ENCODE measurements at regions of chr9 and their contacts with region 1.

Region 1: GRCh38 chr9:107172160-107172978 is 110.7 kb upstream of the RAD23B start:
- DNase-seq: peak; percentile 82
- ATAC-seq: peak; percentile 49
- H3K4me3 Mint-ChIP-seq: no peak overlapping the region
- H3K27ac Mint-ChIP-seq: no peak overlapping the region
- H3K4me1 Mint-ChIP-seq: peaks cover 22% of the 10 kb centered on the region
- H3K27me3 Mint-ChIP-seq: peaks cover 7% of the 10 kb centered on the region

Region 2: DNA sequence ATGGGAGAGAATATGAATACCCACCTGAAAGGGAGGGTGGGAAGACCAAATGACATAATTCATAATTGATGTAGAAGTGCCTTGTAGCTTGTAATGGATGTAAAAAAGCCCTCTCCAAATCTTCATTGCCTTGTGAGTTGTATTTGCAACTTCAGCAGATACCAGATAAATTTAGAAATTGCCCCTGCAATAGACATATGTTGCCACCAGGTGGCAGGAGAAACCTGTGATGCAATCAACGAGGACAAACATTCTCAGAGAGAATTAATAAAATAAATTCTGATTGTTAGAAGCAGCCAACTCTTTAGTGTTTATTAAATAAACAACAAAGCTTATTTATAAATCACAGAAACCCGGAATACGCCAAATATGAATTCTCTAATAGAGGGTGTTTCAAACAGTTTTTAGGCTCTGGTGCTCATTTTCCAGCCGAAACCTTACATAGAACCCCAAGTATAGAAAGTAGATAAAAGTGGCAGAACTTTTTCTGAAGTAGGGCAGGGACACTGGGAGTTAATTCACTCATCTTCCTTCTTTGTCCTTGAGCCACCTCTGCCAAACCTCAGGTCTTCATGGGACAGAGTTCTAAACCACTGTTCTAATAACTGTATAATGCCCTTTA is 1330.2 kb before region 1 on chr9:
- CTCF ChIA-PET with region 1: interaction called, 3 read pairs
- POLR2A ChIA-PET with region 1: no interaction called
- intact Hi-C with region 1: loop called in 1 of 2 experiments (anchors 2 kb)
- DNase-seq: peak; percentile 54
- ATAC-seq: no peak
- H3K4me3 Mint-ChIP-seq: no peak overlapping the region
- H3K27ac Mint-ChIP-seq: no peak overlapping the region
- H3K4me1 Mint-ChIP-seq: no peaks in the 10 kb centered on the region
- H3K27me3 Mint-ChIP-seq: no peaks in the 10 kb centered on the region

Region 3: GRCh38 chr9:105901514-105902109 is 1270.8 kb before region 1 on chr9:
- CTCF ChIA-PET with region 1: no interaction called
- POLR2A ChIA-PET with region 1: no interaction called
- intact Hi-C with region 1: loop called in 1 of 2 experiments (anchors 5 kb)
- DNase-seq: peak; percentile 27
- ATAC-seq: no peak
- H3K4me3 Mint-ChIP-seq: no peak overlapping the region
- H3K27ac Mint-ChIP-seq: no peak overlapping the region
- H3K4me1 Mint-ChIP-seq: no peaks in the 10 kb centered on the region
- H3K27me3 Mint-ChIP-seq: no peaks in the 10 kb centered on the region

Region 4: GRCh38 chr9:107137495-107138202 is 34.7 kb before region 1 on chr9:
- CTCF ChIA-PET with region 1: interaction called, 6 read pairs
- POLR2A ChIA-PET with region 1: no interaction called
- intact Hi-C with region 1: loop called in 1 of 2 experiments (anchors 1 kb)
- DNase-seq: peak; percentile 11
- ATAC-seq: no peak
- H3K4me3 Mint-ChIP-seq: no peak overlapping the region
- H3K27ac Mint-ChIP-seq: no peak overlapping the region
- H3K4me1 Mint-ChIP-seq: no peaks in the 10 kb centered on the region
- H3K27me3 Mint-ChIP-seq: peaks cover 12% of the 10 kb centered on the region

Region 5: GRCh38 chr9:107148216-107148615 is 24.2 kb before region 1 on chr9:
- CTCF ChIA-PET with region 1: no interaction called
- POLR2A ChIA-PET with region 1: no interaction called
- intact Hi-C with region 1: no loop called
- DNase-seq: no peak
- ATAC-seq: no peak
- H3K4me3 Mint-ChIP-seq: no peak overlapping the region
- H3K27ac Mint-ChIP-seq: no peak overlapping the region
- H3K4me1 Mint-ChIP-seq: no peaks in the 10 kb centered on the region
- H3K27me3 Mint-ChIP-seq: peaks cover 12% of the 10 kb centered on the region

Region 6: GRCh38 chr9:107213561-107214028 is 41.2 kb after region 1 on chr9:
- CTCF ChIA-PET with region 1: no interaction called
- POLR2A ChIA-PET with region 1: no interaction called
- intact Hi-C with region 1: loop called (anchors 2 kb)
- DNase-seq: peak; percentile 41
- ATAC-seq: peak; percentile 99
- H3K4me3 Mint-ChIP-seq: no peak overlapping the region
- H3K27ac Mint-ChIP-seq: peak overlapping the region; percentile 11
- H3K4me1 Mint-ChIP-seq: peaks cover 14% of the 10 kb centered on the region
- H3K27me3 Mint-ChIP-seq: peaks cover 7% of the 10 kb centered on the region

Region 7: GRCh38 chr9:107243751-107244150 is 71.4 kb after region 1 on chr9:
- CTCF ChIA-PET with region 1: no interaction called
- POLR2A ChIA-PET with region 1: no interaction called
- intact Hi-C with region 1: loop called (anchors 1 to 5 kb)
- DNase-seq: peak; percentile 74
- ATAC-seq: peak; percentile 92
- H3K4me3 Mint-ChIP-seq: no peak overlapping the region
- H3K27ac Mint-ChIP-seq: peak overlapping the region; percentile 84
- H3K4me1 Mint-ChIP-seq: peaks cover 32% of the 10 kb centered on the region
- H3K27me3 Mint-ChIP-seq: peaks cover 2% of the 10 kb centered on the region

Measured in activated CD4-positive, alpha-beta T cell treated with anti-CD3 and anti-CD28 coated beads for 36 hours (primary cell).